Tibial artery (tissue), 4 donors: ENCODE measurements at regions of chr3 and their contacts with region 1.

Region 1: DNA sequence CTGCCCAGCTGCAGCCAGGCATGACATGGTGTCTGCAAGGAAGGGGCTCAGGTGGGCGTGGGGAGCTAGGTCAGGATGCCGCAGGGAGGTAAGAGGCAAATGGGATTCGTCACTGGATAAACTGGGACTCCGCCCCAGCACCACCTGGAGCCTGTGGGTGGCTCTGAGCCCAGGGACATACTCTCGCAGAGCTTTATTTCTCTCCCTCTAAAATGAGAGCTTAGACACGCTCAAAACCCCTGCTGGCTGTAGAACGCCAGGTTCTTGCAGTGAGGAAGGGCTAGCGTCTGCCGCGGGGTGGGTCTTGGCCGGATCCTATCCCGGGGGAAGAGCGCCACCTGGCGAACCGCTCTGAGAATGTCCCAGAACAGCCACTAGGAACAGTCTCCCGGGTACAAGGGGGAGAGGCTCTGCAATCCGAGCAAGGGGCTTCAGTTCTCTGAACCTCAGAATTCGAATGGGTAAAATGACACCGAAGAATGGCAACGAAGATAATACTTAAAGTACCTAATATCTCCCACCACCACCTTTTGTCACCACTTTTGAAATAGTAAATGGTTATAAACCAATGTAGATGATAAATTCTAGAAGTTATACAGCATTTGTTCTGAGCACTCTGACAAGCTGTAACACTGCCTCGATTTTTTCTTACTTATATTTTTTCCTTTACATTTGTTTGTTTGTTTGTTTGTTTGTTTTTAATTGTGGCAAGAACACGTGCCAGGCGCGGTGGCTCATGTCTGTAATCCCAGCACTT is 53.2 kb upstream of the SRGAP3 start:
- DNase-seq: peak; percentile 62 to 77
- H3K4me3 ChIP-seq: peak overlapping the region in 1 of 2 donors; percentile 11
- H3K27ac ChIP-seq: no peak overlapping the region
- H3K4me1 ChIP-seq: peaks cover 0 to 8% (median 3%) of the 10 kb centered on the region in 4 donors
- H3K27me3 ChIP-seq: peaks cover 0 to 2% of the 10 kb centered on the region in 2 donors
- CTCF ChIP-seq: peak; percentile 87 to 91

Region 2: DNA sequence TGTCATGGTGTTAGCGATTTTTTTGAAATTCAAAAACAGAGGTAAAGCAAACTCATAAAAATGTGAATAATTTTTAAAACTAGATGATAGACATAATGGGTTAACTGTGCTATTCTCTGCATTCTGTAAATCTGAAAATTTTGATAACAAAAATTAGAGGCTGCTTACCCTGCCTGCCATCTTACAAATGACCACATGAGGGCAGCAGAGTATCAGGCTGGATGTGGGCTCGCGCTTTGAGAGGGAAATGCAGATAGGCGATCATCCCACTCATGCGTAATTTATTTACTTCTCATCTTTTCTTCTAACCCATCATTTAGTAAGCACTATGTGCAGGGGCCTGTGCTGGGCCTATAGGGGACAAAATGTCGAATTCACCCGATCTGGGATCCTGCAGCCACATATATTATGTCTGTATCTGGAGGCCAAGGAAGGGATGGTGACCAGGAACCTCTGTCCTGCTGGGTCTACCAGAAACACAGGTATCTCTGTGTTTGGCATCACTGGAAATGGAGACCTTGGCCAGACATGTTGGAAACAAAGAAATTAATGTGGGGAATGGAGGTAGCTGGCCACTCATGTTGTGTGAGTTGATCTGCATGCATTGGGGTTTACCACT is 331.5 kb before region 1 on chr3:
- intact Hi-C with region 1: loop called (anchors 5 kb)
- DNase-seq: peak in 1 of 2 donors; percentile 54
- H3K4me3 ChIP-seq: no peak overlapping the region
- H3K27ac ChIP-seq: no peak overlapping the region
- H3K4me1 ChIP-seq: peaks cover 0 to 4% (median 0%) of the 10 kb centered on the region in 4 donors
- H3K27me3 ChIP-seq: peaks cover 0 to 15% of the 10 kb centered on the region in 2 donors
- CTCF ChIP-seq: peak; percentile 97 to 99

Region 3: GRCh38 chr3:8987645-8988383 is 314.8 kb before region 1 on chr3:
- intact Hi-C with region 1: loop called (anchors 5 kb)
- DNase-seq: peak; percentile 64 to 75
- H3K4me3 ChIP-seq: no peak overlapping the region
- H3K27ac ChIP-seq: no peak overlapping the region
- H3K4me1 ChIP-seq: peaks cover 0 to 3% (median 0%) of the 10 kb centered on the region in 4 donors
- H3K27me3 ChIP-seq: peaks cover 0 to 5% of the 10 kb centered on the region in 2 donors
- CTCF ChIP-seq: peak; percentile 72 to 73

Region 4: DNA sequence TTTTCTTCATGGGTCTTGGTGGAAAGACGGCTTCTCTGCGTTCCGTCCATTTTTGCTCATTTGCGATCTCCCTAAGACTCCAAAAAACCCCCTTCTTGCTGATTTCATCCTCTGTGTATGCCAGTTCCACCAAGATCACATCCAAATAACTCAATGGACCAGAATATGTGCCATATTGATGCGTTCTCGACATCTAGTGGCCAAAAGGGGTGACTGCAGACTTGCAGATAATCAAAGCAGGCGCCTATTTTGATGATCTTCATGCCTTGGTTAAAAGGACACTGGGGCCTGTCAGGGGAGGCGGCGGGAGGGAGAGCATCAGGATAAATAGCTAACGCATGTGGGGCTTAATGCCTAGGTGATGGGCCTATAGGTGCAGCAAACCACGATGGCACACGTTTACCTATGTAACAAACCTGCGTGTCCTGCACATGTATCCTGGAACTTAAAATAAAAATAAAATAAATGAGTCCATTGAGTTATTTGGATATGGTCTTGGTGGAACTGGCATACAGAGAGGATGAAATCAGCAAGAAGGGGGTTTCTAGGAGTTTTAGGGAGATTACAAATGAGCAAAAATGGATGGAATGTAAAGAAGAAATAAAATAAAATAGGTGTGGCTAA is 235.1 kb before region 1 on chr3:
- intact Hi-C with region 1: loop called (anchors 5 kb)
- DNase-seq: peak in 1 of 2 donors; percentile 39
- H3K4me3 ChIP-seq: no peak overlapping the region
- H3K27ac ChIP-seq: no peak overlapping the region
- H3K4me1 ChIP-seq: no peaks in the 10 kb centered on the region
- H3K27me3 ChIP-seq: peaks cover 0 to 13% of the 10 kb centered on the region in 2 donors
- CTCF ChIP-seq: peak; percentile 93 to 94

Region 5: GRCh38 chr3:9224490-9224889 is 78.1 kb before region 1 on chr3:
- intact Hi-C with region 1: no loop called
- DNase-seq: no peak
- H3K4me3 ChIP-seq: no peak overlapping the region
- H3K27ac ChIP-seq: no peak overlapping the region
- H3K4me1 ChIP-seq: peaks cover 0 to 12% (median 0%) of the 10 kb centered on the region in 4 donors
- H3K27me3 ChIP-seq: no peaks in the 10 kb centered on the region
- CTCF ChIP-seq: no peak

Region 6: GRCh38 chr3:9249273-9250192 is 53.1 kb before region 1 on chr3 and contains the start of gene SRGAP3:
- intact Hi-C with region 1: no loop called
- DNase-seq: peak; percentile 86 to 88
- H3K4me3 ChIP-seq: peak within 1 kb of the TSS; percentile 43 to 52
- H3K27ac ChIP-seq: peak within 1 kb of the TSS in 1 of 2 donors; percentile 30
- H3K4me1 ChIP-seq: peaks cover 0 to 25% (median 15%) of the 10 kb centered on the region in 4 donors
- H3K27me3 ChIP-seq: no peaks in the 10 kb centered on the region
- CTCF ChIP-seq: peak; percentile 36 to 48